Activated T-helper 1 cell treated with anti-CD3 and anti-CD28 coated beads, Interleukin-12 subunit alpha, Interleukin-12 subunit beta, Interleukin-2, Interleukin-4 antibody, amounts not matched to agents 30 ng/mL and 10 ng/mL and 1 ng/mL, durations not matched to agents 14 hours and 24 hours and 36 hours (primary cell): ENCODE measurements at regions of chr16 and their contacts with region 1.

Region 1: GRCh38 chr16:70342016-70342415 is 4.7 kb upstream of the DDX19A start:
- DNase-seq: no peak
- H3K4me3 Mint-ChIP-seq: no peak overlapping the region
- H3K27ac Mint-ChIP-seq: no peak overlapping the region
- H3K4me1 Mint-ChIP-seq: peaks cover 5% of the 10 kb centered on the region
- H3K27me3 Mint-ChIP-seq: no peaks in the 10 kb centered on the region

Region 2: GRCh38 chr16:69848637-69849545 is 493.1 kb before region 1 on chr16:
- intact Hi-C with region 1: no loop called
- DNase-seq: no peak
- H3K4me3 Mint-ChIP-seq: no peak overlapping the region
- H3K27ac Mint-ChIP-seq: no peak overlapping the region
- H3K4me1 Mint-ChIP-seq: no peaks in the 10 kb centered on the region
- H3K27me3 Mint-ChIP-seq: no peaks in the 10 kb centered on the region

Region 3: GRCh38 chr16:70289229-70290098 is 52.6 kb before region 1 on chr16 and contains the start of gene AARS1:
- intact Hi-C with region 1: loop called (anchors 1 kb)
- DNase-seq: peak; percentile 95
- H3K4me3 Mint-ChIP-seq: peak within 1 kb of the TSS; percentile 96
- H3K27ac Mint-ChIP-seq: peak within 1 kb of the TSS; percentile 99
- H3K4me1 Mint-ChIP-seq: peaks cover 23% of the 10 kb centered on the region
- H3K27me3 Mint-ChIP-seq: no peaks in the 10 kb centered on the region
- total RNA-seq, gene AARS1: 109 and 111 TPM in 2 replicates

Region 4: DNA sequence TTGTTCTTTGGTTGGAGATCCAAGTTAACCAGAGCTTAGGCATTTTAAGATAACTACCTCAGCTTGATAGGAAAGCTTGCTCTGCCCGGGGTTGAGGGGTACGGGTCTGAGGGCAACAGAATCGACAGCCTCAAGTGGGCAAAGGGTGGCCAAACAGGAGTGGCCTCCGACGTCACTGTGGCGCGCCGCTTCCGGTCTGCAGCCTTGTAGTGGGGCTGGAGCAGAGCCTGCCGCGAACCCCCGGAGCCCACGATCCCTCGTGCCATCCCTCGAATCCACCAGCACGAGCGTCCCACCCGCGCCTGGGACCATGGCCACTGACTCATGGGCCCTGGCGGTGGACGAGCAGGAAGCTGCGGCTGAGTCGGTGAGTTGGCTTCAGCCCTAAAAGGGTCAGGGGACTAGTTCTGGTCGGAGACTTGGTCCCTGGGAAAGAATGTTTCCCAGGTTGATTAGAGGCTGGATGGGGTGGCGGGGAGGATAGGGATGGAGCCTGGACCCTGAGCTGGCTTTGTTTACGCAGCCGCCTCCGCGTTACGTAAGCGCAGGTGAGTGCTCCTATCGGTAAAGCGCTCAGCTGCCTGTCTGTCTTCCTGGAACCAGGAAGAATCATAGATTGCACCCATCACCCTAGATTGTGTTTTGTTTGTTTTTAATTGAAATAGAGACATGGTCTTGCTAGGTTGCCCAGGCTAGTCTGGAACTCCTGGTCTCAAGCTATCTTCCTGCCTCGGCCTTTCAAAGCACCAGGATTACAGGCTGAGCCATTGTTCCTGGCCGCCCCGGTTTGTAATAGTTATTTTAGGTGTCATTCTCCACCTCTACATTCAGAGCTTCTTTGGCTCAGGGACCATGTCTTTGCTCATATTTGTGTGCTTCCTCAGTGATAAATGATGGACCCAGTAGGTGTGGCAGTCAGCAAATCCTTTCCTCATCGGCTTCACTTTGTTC is 42.8 kb before region 1 on chr16 and contains the start of gene DDX19B:
- intact Hi-C with region 1: loop called (anchors 2 kb)
- DNase-seq: peak; percentile 58
- H3K4me3 Mint-ChIP-seq: peak within 1 kb of the TSS; percentile 95
- H3K27ac Mint-ChIP-seq: peak within 1 kb of the TSS; percentile 90
- H3K4me1 Mint-ChIP-seq: peaks cover 39% of the 10 kb centered on the region
- H3K27me3 Mint-ChIP-seq: peaks cover 3% of the 10 kb centered on the region
- total RNA-seq, gene DDX19B: 28.0 and 31.2 TPM in 2 replicates

Region 5: DNA sequence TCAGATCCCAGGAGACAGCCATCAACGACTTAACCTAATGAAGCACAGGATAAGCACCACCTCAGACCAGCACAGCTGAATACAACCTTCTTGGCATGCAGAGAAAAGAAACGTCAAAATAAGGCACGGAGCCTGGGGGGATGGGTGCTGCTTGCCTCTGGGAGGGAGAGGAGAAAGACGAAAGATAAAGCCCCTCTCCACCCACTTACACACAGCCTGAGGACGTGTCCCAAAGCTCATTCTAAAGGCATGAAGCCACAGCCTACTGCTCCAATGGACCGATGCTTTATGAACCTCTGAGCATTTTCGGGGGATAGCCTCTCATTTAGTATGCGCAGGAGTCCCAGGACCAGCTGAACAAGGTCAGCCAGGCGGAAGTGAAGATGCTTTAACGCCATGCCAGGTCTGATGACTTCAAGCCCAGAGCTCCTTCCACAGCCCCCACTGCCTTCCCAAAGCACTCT is 65.8 kb after region 1 on chr16:
- intact Hi-C with region 1: no loop called
- DNase-seq: no peak
- H3K4me3 Mint-ChIP-seq: no peak overlapping the region
- H3K27ac Mint-ChIP-seq: no peak overlapping the region
- H3K4me1 Mint-ChIP-seq: peaks cover 45% of the 10 kb centered on the region
- H3K27me3 Mint-ChIP-seq: no peaks in the 10 kb centered on the region